ENCODE measurements at regions of chr3 and their contacts with region 1.

Region 1: DNA sequence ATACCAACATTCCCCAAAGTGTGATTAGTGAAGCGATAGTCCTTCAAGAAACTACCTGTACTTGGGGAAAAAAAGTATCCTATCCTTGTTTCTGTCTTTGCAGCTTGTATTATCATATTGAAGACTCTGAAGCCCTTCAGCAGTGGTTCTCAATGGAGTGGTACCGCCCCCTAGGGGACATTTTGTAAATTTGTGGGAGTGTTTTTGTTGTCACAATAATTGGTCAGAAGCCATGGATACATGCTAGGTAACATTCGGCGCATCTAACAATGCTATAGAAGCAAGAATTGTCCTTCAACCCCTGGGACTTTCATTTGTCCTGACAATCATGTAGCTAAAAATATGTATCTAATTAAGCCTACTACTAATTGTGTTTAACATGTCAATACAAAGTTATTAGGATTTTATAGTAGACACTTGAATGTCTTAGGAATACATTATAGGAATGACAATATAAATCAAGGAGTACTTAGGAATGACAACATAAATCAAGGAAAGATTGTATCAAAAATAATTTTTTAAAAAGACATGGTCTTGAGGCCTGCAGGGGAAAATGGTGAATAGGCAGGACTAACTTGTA is 53.7 kb downstream of the NMD3 start:
- DNase-seq: peak; percentile 26
- H3K4me3 ChIP-seq: no peak overlapping the region
- H3K27ac ChIP-seq: no peak overlapping the region
- H3K27me3 ChIP-seq: no peaks in the 10 kb centered on the region
- CTCF ChIP-seq: peak; percentile 73

Region 2: GRCh38 chr3:160941885-160942494 is 332.8 kb before region 1 on chr3:
- CTCF ChIA-PET with region 1: interaction called, 12 read pairs
- POLR2A ChIA-PET with region 1: no interaction called
- DNase-seq: peak; percentile 24
- H3K4me3 ChIP-seq: no peak overlapping the region
- H3K27ac ChIP-seq: no peak overlapping the region
- H3K27me3 ChIP-seq: no peaks in the 10 kb centered on the region
- CTCF ChIP-seq: peak; percentile 85

Region 3: GRCh38 chr3:161220850-161221753 is 53.7 kb before region 1 on chr3 and contains the start of gene NMD3:
- CTCF ChIA-PET with region 1: interaction called, 12 read pairs
- POLR2A ChIA-PET with region 1: no interaction called
- DNase-seq: peak; percentile 77
- H3K4me3 ChIP-seq: peak within 1 kb of the TSS; percentile 89
- H3K27ac ChIP-seq: peak within 1 kb of the TSS; percentile 83
- H3K27me3 ChIP-seq: no peaks in the 10 kb centered on the region
- CTCF ChIP-seq: no peak
- polyA plus RNA-seq, gene NMD3: 61.0 and 70.5 TPM in 2 replicates

Region 4: GRCh38 chr3:161291195-161291912 is 16.5 kb after region 1 on chr3:
- CTCF ChIA-PET with region 1: interaction called, 36 read pairs
- POLR2A ChIA-PET with region 1: no interaction called
- DNase-seq: no peak
- H3K4me3 ChIP-seq: no peak overlapping the region
- H3K27ac ChIP-seq: no peak overlapping the region
- H3K27me3 ChIP-seq: no peaks in the 10 kb centered on the region
- CTCF ChIP-seq: no peak

Region 5: GRCh38 chr3:161310649-161311423 is 36.0 kb after region 1 on chr3:
- CTCF ChIA-PET with region 1: no interaction called
- POLR2A ChIA-PET with region 1: no interaction called
- DNase-seq: no peak
- H3K4me3 ChIP-seq: no peak overlapping the region
- H3K27ac ChIP-seq: no peak overlapping the region
- H3K27me3 ChIP-seq: no peaks in the 10 kb centered on the region
- CTCF ChIP-seq: no peak

Region 6: DNA sequence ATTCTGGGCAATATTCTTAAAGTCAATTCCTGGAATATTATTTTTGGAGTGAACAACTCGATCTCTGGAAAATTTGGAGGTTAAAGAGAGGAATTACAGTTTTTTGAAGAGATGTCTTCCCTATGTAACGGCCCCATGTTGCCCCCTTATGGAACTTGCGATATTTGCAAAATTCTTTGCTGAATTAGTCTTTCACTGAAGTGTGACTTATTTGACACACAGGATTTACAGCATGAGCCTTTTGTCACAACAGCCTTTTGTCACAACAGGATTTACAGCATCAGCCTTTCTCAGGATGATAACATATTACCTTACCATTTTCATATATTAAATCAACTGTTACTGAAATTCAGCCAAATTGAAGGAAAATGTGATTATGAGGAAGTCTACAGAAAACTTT is 134.3 kb after region 1 on chr3:
- CTCF ChIA-PET with region 1: interaction called, 24 read pairs
- POLR2A ChIA-PET with region 1: no interaction called
- DNase-seq: no peak
- H3K4me3 ChIP-seq: no peak overlapping the region
- H3K27ac ChIP-seq: no peak overlapping the region
- H3K27me3 ChIP-seq: no peaks in the 10 kb centered on the region
- CTCF ChIP-seq: peak; percentile 63

Region 7: GRCh38 chr3:161423911-161424522 is 149.2 kb after region 1 on chr3:
- CTCF ChIA-PET with region 1: interaction called, 69 read pairs
- POLR2A ChIA-PET with region 1: no interaction called
- DNase-seq: no peak
- H3K4me3 ChIP-seq: no peak overlapping the region
- H3K27ac ChIP-seq: no peak overlapping the region
- H3K27me3 ChIP-seq: no peaks in the 10 kb centered on the region
- CTCF ChIP-seq: peak; percentile 58

Measured in AG04450 (cell line).